ENCODE measurements at regions of chr5 and their contacts with region 1.

Region 1: DNA sequence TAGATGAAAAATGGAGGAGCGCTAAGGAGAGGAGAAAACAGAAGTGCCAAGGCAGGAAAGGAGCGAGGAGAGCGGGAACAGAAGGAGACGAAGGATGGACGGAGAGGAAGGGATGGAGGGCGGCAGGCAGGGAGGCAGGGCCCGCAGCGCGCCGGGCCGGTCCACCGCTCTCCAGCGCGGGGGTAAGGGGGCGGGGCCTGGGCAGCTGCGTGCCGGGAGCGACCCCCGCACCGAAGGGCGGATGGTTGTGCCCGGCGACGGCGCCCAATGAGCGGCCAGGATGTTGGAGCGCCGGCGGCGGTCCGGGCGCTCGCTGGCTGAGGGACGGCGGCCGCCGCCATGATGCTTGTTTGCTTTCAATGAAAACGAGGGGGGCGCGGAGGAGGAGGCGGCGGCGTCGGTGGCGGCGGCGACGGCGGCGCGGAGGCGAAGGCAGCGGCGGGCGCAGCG is at the start of gene CNOT6:
- DNase-seq: peak; percentile 93
- H3K4me3 ChIP-seq: peak within 1 kb of the TSS; percentile 86 to 90 (median 87)
- H3K27ac ChIP-seq: peak within 1 kb of the TSS; percentile 74
- H3K4me1 ChIP-seq: peaks cover 7% of the 10 kb centered on the region
- H3K27me3 ChIP-seq: no peaks in the 10 kb centered on the region
- CTCF ChIP-seq: no peak
- POLR2A ChIP-seq: no peak
- total RNA-seq, gene CNOT6: 33.8 and 35.5 TPM in 2 replicates

Region 2: GRCh38 chr5:180353048-180353979 is 140.8 kb before region 1 on chr5 and contains the start of gene GFPT2:
- CTCF ChIA-PET with region 1: no interaction called
- POLR2A ChIA-PET with region 1: no interaction called
- dilution Hi-C with region 1: no loop called
- intact Hi-C with region 1: loop called (anchors 5 kb)
- DNase-seq: peak; percentile 65
- H3K4me3 ChIP-seq: peak within 1 kb of the TSS; percentile 56 to 74 (median 70)
- H3K27ac ChIP-seq: peak within 1 kb of the TSS; percentile 34
- H3K4me1 ChIP-seq: peaks cover 8% of the 10 kb centered on the region
- H3K27me3 ChIP-seq: peaks cover 7 to 30% of the 10 kb centered on the region in 2 experiments
- CTCF ChIP-seq: no peak
- POLR2A ChIP-seq: no peak
- total RNA-seq, gene GFPT2: 4.5 and 5.5 TPM in 2 replicates

Region 3: GRCh38 chr5:180555168-180555921 is 61.3 kb after region 1 on chr5:
- CTCF ChIA-PET with region 1: no interaction called
- POLR2A ChIA-PET with region 1: no interaction called
- dilution Hi-C with region 1: no loop called
- intact Hi-C with region 1: no loop called
- DNase-seq: no peak
- H3K4me3 ChIP-seq: no peak overlapping the region
- H3K27ac ChIP-seq: no peak overlapping the region
- H3K4me1 ChIP-seq: no peaks in the 10 kb centered on the region
- H3K27me3 ChIP-seq: no peaks in the 10 kb centered on the region
- CTCF ChIP-seq: no peak
- POLR2A ChIP-seq: no peak

Region 4: GRCh38 chr5:180605554-180606214 is 111.6 kb after region 1 on chr5:
- CTCF ChIA-PET with region 1: interaction called, 4 read pairs
- POLR2A ChIA-PET with region 1: no interaction called
- dilution Hi-C with region 1: no loop called
- intact Hi-C with region 1: loop called (anchors 2 kb)
- DNase-seq: peak; percentile 59
- H3K4me3 ChIP-seq: no peak overlapping the region
- H3K27ac ChIP-seq: no peak overlapping the region
- H3K4me1 ChIP-seq: peaks cover 3% of the 10 kb centered on the region
- H3K27me3 ChIP-seq: no peaks in the 10 kb centered on the region
- CTCF ChIP-seq: peak; percentile 80 to 83
- POLR2A ChIP-seq: no peak

Region 5: DNA sequence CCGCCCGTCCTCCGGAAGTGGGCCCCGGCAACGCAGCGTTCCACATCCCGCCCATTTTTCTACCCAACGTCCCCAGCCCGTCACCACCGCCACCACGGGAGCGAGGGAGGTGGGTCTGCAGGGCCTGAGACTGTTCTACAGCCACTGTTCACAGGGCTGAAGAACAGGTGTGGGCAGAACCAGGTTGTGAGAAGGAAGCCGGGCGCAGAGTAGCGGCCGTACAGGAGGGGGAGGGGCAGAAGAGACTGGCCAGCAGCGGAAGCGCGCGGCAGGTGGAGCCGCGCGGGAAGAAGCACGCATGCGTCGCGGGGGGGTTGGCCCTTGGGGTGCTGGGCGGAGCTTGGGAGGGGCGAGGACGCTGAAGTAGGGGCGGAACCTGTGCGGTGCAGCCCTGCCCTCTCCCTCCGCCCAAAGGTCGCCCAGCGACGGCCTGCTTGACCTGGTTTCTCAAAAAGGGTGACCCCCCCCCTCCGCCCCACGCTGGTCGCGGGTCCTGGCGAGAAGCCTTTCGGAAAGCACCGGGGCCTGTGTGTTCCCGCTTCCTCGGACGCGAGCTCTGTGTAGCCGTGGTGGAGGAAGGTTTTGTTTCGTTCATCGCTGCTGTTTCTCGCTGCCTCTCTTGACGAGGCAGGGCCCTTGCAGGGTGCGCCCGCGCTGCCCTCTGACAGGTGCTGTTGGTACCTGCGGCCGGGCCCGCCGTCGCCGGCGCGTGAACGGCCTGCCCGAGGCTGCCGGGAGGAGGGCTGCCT is 316.3 kb after region 1 on chr5:
- CTCF ChIA-PET with region 1: no interaction called
- POLR2A ChIA-PET with region 1: no interaction called
- dilution Hi-C with region 1: no loop called
- intact Hi-C with region 1: loop called (anchors 10 kb)
- DNase-seq: peak; percentile 95
- H3K4me3 ChIP-seq: peak overlapping the region; percentile 43 to 72 (median 60)
- H3K27ac ChIP-seq: peak overlapping the region; percentile 88
- H3K4me1 ChIP-seq: peaks cover 38% of the 10 kb centered on the region
- H3K27me3 ChIP-seq: no peaks in the 10 kb centered on the region
- CTCF ChIP-seq: no peak
- POLR2A ChIP-seq: peak; percentile 56

Region 6: GRCh38 chr5:181181650-181182565 is 687.8 kb after region 1 on chr5:
- CTCF ChIA-PET with region 1: no interaction called
- POLR2A ChIA-PET with region 1: no interaction called
- dilution Hi-C with region 1: no loop called
- intact Hi-C with region 1: loop called (anchors 10 kb)
- DNase-seq: peak; percentile 77
- H3K4me3 ChIP-seq: no peak overlapping the region
- H3K27ac ChIP-seq: no peak overlapping the region
- H3K4me1 ChIP-seq: no peaks in the 10 kb centered on the region
- H3K27me3 ChIP-seq: peaks cover 3 to 4% of the 10 kb centered on the region in 2 experiments
- CTCF ChIP-seq: peak; percentile 76 to 79
- POLR2A ChIP-seq: no peak

Measured in endothelial cell of umbilical vein (primary cell).